Adrenal gland (tissue), 19 donors: ENCODE measurements at regions of chr6 and their contacts with region 1.

Region 1: DNA sequence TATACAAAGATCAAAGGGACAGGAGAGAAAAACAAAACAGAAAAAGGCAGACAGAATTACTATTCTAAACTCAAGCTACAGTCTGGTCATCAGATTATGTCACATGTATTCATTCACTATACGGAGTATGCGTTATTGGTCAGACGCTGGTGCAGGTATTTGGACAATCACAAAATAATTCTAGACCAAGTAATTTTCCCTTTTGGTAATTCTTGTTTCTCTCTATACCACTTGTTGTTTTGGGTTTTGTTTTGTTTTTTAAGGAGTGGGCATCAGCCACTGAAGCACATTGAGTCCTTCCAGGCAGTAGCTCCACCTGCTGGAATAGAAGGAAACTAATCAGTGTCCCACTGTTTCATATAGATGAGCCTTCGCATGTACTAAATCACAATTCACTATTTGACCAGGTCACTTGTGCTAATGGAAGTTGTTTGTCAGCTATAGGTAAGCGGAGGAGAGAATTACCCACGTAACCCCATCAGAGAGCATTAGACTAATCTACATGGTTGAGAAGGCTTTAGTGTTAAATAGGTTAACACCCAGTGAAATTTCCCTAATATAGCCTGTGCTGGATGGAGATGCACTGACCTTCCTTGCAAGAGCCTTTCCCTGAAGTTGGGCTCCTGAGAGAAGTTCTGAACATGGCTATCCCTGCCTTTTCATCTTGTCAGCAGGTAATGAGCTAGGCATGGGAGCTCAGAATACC is 77.9 kb downstream of the TNFAIP3 start:
- DNase-seq: peak in 3 of 7 donors; percentile 26 to 28 (median 27)
- H3K4me3 ChIP-seq: no peak overlapping the region
- H3K27ac ChIP-seq: no peak overlapping the region
- H3K4me1 ChIP-seq: no peaks in the 10 kb centered on the region
- H3K27me3 ChIP-seq: no peaks in the 10 kb centered on the region
- CTCF ChIP-seq: peak; percentile 67 to 82 (median 78)
- POLR2A ChIP-seq: no peak

Region 2: GRCh38 chr6:137707590-137708360 is 237.2 kb before region 1 on chr6:
- intact Hi-C with region 1: loop called (anchors 2 to 5 kb)
- DNase-seq: peak; percentile 59 to 84 (median 77)
- H3K4me3 ChIP-seq: peak overlapping the region in 1 of 4 donors; percentile 24
- H3K27ac ChIP-seq: peak overlapping the region in 1 of 5 donors; percentile 16
- H3K4me1 ChIP-seq: peaks cover 5 to 13% of the 10 kb centered on the region in 2 donors
- H3K27me3 ChIP-seq: no peaks in the 10 kb centered on the region
- CTCF ChIP-seq: peak; percentile 60 to 87 (median 78)
- POLR2A ChIP-seq: no peak

Region 3: GRCh38 chr6:137799950-137800568 is 144.9 kb before region 1 on chr6:
- intact Hi-C with region 1: loop called in 1 of 2 experiments (anchors 5 kb)
- DNase-seq: peak; percentile 49 to 79 (median 69)
- H3K4me3 ChIP-seq: no peak overlapping the region
- H3K27ac ChIP-seq: no peak overlapping the region
- H3K4me1 ChIP-seq: peaks cover 0 to 14% of the 10 kb centered on the region in 2 donors
- H3K27me3 ChIP-seq: no peaks in the 10 kb centered on the region
- CTCF ChIP-seq: peak; percentile 52 to 70 (median 68)
- POLR2A ChIP-seq: no peak

Region 4: DNA sequence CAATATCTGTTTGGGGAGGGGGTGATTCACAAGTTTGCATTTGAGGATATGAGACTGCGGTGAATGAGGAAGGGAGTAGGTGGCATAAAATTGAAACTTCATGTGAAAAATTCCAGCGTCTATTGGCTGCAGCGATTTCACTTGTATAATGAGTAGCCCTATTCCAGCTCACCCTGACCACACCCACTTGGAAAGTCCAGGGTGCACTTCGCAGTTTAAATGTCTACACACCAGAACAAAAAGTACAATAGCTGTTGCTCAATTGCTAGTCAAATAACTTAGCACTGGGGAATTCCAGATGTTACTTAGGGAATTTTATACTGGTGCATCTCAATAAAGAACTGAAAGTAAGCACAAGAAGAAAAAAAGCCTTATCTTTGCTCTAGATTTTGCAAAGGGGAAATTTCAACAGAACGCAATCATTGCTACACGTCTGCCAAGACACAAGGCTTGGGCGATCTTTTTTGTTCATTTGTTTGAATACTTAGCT is 71.6 kb before region 1 on chr6:
- intact Hi-C with region 1: loop called (anchors 5 to 10 kb)
- DNase-seq: peak; percentile 42 to 88 (median 78)
- H3K4me3 ChIP-seq: peak overlapping the region in 1 of 4 donors; percentile 15
- H3K27ac ChIP-seq: peak overlapping the region in 4 of 5 donors; percentile 21 to 40 (median 36)
- H3K4me1 ChIP-seq: peaks cover 0 to 29% of the 10 kb centered on the region in 2 donors
- H3K27me3 ChIP-seq: no peaks in the 10 kb centered on the region
- CTCF ChIP-seq: no peak
- POLR2A ChIP-seq: peak in 1 of 2 donors; percentile 22

Region 5: GRCh38 chr6:137878486-137879285 is 66.3 kb before region 1 on chr6:
- intact Hi-C with region 1: loop called (anchors 5 to 10 kb)
- DNase-seq: peak in 1 of 7 donors; percentile 22
- H3K4me3 ChIP-seq: no peak overlapping the region
- H3K27ac ChIP-seq: peak overlapping the region in 1 of 5 donors; percentile 35
- H3K4me1 ChIP-seq: peaks cover 0 to 21% of the 10 kb centered on the region in 2 donors
- H3K27me3 ChIP-seq: no peaks in the 10 kb centered on the region
- CTCF ChIP-seq: peak in 2 of 6 experiments; percentile 8 to 16
- POLR2A ChIP-seq: no peak